AG04449 (cell line): ENCODE measurements at regions of chr11 and their contacts with region 1.

Region 1: GRCh38 chr11:6682936-6683861 is at the start of gene MRPL17:
- DNase-seq: peak; percentile 86
- H3K4me3 ChIP-seq: peak within 1 kb of the TSS; percentile 100
- CTCF ChIP-seq: peak; percentile 88

Region 2: DNA sequence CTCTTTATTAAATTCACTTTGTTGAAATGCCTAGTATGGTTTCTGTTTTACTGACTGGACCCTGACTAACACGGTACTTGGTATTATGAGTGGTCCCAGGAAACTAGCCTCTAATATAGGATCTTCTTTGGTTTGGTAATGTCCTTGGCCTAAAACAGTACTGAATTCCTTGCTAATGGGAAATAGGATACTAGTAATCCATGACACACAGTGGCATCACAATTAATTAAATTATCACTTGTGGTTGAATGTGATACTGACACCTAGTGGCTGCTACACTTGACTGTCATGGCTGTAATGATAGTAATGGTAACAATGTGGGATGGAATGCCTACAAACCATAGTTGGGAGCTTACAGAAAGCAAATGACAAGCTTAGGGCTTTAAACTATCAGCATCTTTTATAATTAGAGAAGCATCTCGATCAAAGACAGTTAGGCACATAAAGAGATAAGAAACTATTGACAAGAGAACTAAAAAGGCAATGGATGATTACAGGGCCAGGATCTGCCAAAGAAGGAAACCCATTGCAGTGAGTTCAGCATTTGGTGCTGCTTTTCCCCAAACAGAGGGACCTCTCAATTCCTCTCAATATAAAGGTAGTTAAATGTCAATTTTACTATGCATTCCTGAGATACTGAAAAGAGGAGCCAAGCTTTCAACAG is 177.5 kb before region 1 on chr11:
- CTCF ChIA-PET with region 1: interaction called, 12 read pairs
- POLR2A ChIA-PET with region 1: no interaction called
- DNase-seq: peak; percentile 36
- H3K4me3 ChIP-seq: no peak overlapping the region
- CTCF ChIP-seq: peak; percentile 46

Region 3: DNA sequence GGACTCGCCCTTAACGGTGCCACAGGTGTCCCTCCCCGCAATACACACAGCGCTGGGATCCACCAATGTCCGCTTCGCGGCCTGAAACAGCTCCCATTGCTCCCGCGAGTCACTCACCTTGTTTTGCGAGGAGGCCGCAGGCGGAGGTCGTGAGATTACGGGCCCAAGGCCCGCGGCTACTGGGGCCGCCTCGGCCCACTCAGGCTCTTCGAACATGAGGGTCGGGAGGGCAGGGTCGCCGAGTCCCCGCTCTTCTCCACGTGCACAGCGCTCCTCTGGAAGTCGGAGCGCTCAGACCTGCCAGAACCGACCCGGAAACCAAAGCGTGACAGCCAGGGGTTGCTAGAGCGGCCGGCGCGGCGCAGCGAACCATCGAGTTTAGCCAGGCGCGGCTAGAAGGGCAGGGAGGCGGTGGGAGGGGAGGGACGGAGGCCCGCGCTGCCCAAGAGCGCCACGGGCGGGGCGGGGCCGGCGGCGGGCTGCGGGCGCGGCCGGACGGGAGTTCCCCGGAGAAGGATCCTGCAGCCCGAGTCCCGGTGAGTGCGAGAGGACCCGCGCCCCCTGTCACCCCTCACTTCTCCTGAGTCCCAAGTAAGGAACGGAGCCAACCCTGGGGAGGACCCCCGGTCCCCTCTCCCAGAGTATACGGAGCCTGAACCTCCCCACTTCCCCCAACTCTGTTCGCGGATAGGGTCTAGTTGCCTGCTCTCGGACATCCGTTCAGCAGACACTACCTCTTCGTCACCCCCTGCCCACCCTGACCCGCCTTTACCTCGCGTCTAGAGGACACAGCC is 79.7 kb before region 1 on chr11 and contains the starts of genes ILK and RRP8:
- CTCF ChIA-PET with region 1: interaction called, 15 read pairs
- POLR2A ChIA-PET with region 1: interaction called, 3 read pairs
- DNase-seq: no peak
- H3K4me3 ChIP-seq: peak within 1 kb of the TSS; percentile 97
- CTCF ChIP-seq: no peak

Region 4: DNA sequence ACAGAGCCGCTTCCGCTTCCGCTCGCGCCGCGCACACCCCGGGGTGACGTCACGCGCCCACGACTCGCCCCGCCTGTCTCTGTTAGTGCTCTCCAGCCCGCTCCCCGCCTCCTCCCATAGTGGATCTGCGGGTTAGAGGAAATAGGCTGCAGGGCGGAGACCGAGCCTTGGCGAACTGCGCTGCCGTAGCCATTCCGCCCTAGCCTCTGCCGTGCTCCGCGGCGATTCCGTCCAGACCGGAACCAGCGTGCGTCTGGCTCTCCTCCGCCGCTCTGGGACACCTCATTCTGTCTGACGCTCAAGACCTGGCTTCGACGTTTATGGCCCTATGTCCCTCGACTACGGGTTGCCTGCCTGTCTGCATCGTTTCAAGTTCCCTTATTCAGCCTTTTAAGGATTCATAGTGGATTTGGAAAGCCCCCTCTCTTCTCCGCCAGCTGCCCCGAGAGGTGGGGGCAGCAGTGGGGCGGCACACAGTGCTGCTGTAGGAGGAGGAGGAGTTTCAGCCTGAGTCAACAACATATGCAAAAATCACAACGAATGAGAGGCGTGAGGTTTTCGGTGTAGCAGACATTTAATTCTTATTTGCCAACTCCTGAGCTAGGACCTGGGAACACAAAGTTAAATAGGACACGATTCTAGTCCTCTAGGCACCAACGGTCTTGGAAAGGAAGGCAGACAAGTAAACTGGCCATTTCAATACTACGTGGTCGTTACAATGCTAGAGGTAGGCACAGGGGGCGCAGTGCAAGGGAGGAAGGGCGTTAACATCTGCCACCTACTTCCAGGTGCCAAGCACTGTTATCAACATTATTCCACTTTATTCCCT is 70.8 kb before region 1 on chr11 and contains the start of gene TAF10:
- CTCF ChIA-PET with region 1: interaction called, 31 read pairs
- POLR2A ChIA-PET with region 1: interaction called, 4 read pairs
- DNase-seq: peak; percentile 75
- H3K4me3 ChIP-seq: peak within 1 kb of the TSS; percentile 72
- CTCF ChIP-seq: peak; percentile 47

Region 5: DNA sequence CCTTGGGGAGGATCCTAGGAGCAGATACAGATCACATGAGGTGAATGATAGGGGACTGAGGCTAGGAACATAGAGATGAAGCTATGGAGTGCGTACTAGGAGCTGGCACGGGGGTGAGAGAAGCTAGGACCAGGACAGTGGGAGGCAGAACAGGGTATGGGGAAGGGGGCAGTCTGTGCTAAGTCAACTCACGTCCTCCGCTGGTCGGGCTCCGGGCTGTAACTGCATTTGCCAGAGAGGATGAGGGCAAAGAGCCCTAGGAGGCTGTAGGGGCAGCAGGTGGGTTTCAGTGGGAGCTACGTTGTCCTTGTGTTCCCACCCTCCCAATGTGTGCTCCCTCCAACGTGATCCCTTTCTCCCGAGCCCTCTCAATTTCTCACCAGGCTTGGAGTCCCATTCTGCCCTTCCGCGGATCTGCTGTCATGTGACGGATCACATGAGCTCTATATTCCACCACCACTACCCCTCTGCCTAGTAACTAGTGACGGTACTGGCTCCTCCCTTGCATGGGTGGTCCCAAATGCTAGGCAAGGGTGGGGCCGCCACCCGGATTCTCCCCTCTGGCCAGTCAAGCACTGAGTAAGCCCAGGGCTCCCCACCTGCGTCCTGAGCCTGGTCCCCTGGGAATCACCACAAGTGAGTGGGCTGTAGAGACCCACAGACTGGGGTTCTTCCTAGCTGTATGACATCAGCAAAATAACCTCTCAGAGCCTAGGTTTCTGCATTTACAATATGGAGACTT is 64.0 kb before region 1 on chr11 and contains the start of gene TPP1:
- CTCF ChIA-PET with region 1: interaction called, 31 read pairs
- POLR2A ChIA-PET with region 1: interaction called, 7 read pairs
- DNase-seq: no peak
- H3K4me3 ChIP-seq: peak within 1 kb of the TSS; percentile 97
- CTCF ChIP-seq: no peak

Region 6: DNA sequence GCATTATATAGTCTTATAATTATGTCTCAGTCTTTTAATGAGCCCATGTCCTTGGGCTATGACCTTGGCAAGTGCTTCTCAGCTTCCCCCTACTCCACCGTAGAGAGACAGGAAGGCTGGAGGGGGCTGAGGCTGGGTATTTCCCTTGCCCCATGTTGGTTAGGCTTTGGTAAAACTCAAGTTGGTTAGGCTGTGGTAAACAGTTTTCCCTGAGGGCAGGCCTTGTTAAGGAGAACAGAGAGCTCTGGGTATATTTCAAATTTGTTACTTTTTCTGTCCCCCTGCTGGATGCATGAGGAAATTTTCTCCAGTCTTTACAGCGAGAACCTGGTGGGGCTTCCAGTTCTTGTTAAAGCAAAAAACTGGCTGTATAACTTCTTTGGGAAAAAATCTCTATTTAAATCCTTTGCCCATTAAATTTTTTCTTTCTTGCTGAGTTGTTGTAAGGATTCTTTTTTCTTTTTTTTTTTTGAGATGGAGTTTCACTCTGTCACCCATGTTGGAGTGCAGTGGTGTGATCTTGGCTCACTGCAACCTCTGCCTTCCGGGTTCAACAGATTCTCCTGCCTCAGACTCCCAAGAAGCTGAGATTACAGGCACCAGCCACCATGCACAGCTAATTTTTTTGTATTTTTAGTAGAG is 15.3 kb before region 1 on chr11:
- CTCF ChIA-PET with region 1: interaction called, 51 read pairs
- POLR2A ChIA-PET with region 1: no interaction called
- DNase-seq: no peak
- H3K4me3 ChIP-seq: no peak overlapping the region
- CTCF ChIP-seq: peak; percentile 29